ENCODE measurements at regions of chr15 and their contacts with region 1.

Region 1: GRCh38 chr15:66901336-66902100 is 163.9 kb upstream of the SMAD3 start:
- DNase-seq: no peak
- H3K4me3 ChIP-seq: no peak overlapping the region
- H3K27me3 ChIP-seq: no peaks in the 10 kb centered on the region
- CTCF ChIP-seq: no peak

Region 2: GRCh38 chr15:66789029-66790025 is 112.2 kb before region 1 on chr15:
- CTCF ChIA-PET with region 1: no interaction called
- POLR2A ChIA-PET with region 1: no interaction called
- DNase-seq: no peak
- H3K4me3 ChIP-seq: no peak overlapping the region
- H3K27me3 ChIP-seq: no peaks in the 10 kb centered on the region
- CTCF ChIP-seq: peak; percentile 68

Region 3: DNA sequence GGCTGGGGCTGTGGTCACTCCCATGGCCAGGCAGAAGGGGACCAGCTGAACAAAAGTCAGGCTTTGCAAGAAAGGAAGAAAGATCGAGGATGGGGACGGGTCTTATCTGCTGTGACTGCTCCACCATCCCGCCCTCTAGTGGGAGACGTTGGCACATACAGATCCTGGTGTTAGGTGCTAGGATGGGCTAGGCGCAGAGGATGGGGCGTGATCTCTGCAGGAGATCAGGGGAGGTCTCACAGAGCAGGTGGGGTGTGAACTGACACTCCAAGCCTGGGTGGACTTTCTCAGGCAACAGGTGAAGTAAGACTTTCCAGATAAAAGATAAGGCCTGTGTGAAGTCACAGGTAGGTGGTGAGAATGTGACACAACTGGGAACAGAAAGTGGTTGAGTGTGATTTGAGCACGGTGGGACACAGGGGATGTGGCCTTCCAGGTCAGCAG is 21.9 kb after region 1 on chr15:
- CTCF ChIA-PET with region 1: interaction called, 35 read pairs
- POLR2A ChIA-PET with region 1: no interaction called
- DNase-seq: no peak
- H3K4me3 ChIP-seq: no peak overlapping the region
- H3K27me3 ChIP-seq: no peaks in the 10 kb centered on the region
- CTCF ChIP-seq: peak; percentile 50

Measured in BJ (cell line).